ENCODE measurements at regions of chr1 and their contacts with region 1.

Region 1: GRCh38 chr1:201468844-201469511 is at the start of gene PHLDA3:
- DNase-seq: peak; percentile 63 to 85
- H3K4me3 ChIP-seq: peak within 1 kb of the TSS; percentile 97
- H3K27ac ChIP-seq: peak within 1 kb of the TSS; percentile 95
- H3K4me1 ChIP-seq: peaks cover 31% of the 10 kb centered on the region
- H3K27me3 ChIP-seq: no peaks in the 10 kb centered on the region
- CTCF ChIP-seq: no peak
- total RNA-seq, gene PHLDA3: 31.6 and 46.4 TPM in 2 replicates

Region 2: GRCh38 chr1:201447911-201448871 is 20.8 kb before region 1 on chr1:
- CTCF ChIA-PET with region 1: interaction called, 5 read pairs
- POLR2A ChIA-PET with region 1: interaction called, 10 read pairs
- intact Hi-C with region 1: loop called (anchors 2 kb)
- DNase-seq: peak; percentile 65 to 72
- H3K4me3 ChIP-seq: no peak overlapping the region
- H3K27ac ChIP-seq: peak overlapping the region; percentile 38
- H3K4me1 ChIP-seq: peaks cover 22% of the 10 kb centered on the region
- H3K27me3 ChIP-seq: no peaks in the 10 kb centered on the region
- CTCF ChIP-seq: peak; percentile 92

Region 3: GRCh38 chr1:201495471-201496295 is 26.7 kb after region 1 on chr1:
- CTCF ChIA-PET with region 1: no interaction called
- POLR2A ChIA-PET with region 1: interaction called, 19 read pairs
- intact Hi-C with region 1: no loop called
- DNase-seq: no peak
- H3K4me3 ChIP-seq: no peak overlapping the region
- H3K27ac ChIP-seq: no peak overlapping the region
- H3K4me1 ChIP-seq: peaks cover 2% of the 10 kb centered on the region
- H3K27me3 ChIP-seq: no peaks in the 10 kb centered on the region
- CTCF ChIP-seq: no peak

Measured in PC-9 (cell line).